Ovary (tissue), 10 donors: ENCODE measurements at regions of chr11 and their contacts with region 1.

Region 1: DNA sequence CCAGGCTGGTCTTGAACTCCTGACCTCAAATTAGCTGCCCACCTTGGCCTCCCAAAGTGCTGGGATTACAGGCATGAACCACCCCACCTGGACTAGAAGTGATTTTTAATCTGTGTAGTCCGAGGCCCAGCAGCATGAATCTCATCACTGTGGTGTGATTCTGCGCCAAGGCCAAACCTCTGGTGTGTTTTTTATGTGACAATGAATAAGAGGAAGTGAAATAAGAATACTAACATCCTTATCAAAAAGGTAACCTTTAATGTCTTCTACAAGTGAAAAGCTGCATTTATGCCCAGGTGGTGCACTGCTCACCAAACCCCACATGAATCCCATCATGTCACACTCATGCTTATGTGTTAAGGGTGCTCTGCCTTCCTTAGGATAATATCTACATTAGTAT is 77.1 kb upstream of the OR9Q1 start:
- DNase-seq: no peak
- H3K4me3 ChIP-seq: no peak overlapping the region
- H3K27ac ChIP-seq: no peak overlapping the region
- H3K4me1 ChIP-seq: no peaks in the 10 kb centered on the region
- H3K27me3 ChIP-seq: no peaks in the 10 kb centered on the region
- CTCF ChIP-seq: no peak
- EP300 ChIP-seq: no peak
- POLR2A ChIP-seq: no peak

Region 2: GRCh38 chr11:57936050-57936418 is 10.6 kb before region 1 on chr11:
- intact Hi-C with region 1: no loop called
- DNase-seq: no peak
- H3K4me3 ChIP-seq: no peak overlapping the region
- H3K27ac ChIP-seq: no peak overlapping the region
- H3K4me1 ChIP-seq: no peaks in the 10 kb centered on the region
- H3K27me3 ChIP-seq: no peaks in the 10 kb centered on the region
- CTCF ChIP-seq: no peak
- EP300 ChIP-seq: no peak
- POLR2A ChIP-seq: no peak

Region 3: DNA sequence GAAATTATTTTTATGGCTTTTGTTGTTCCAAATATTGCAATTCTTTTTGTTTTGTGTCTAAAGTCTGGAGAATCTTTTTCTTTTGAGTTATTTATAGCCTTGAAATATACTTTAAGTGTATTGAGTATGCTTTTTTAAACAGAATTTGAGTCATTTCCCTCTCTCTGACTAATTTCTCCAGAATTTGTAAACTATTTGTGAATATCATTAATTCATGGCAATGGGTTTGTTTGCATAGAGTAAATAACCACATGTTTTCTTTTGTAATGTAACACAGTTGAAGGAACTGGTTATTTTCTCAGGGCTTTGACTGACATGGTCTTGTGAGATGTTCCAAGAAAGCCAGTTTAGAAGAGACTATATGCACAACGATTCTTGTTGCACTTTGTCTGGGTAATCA is 1297.0 kb after region 1 on chr11:
- intact Hi-C with region 1: loop called in 1 of 4 experiments (anchors 5 kb)
- DNase-seq: no peak
- H3K4me3 ChIP-seq: no peak overlapping the region
- H3K27ac ChIP-seq: no peak overlapping the region
- H3K4me1 ChIP-seq: no peaks in the 10 kb centered on the region
- H3K27me3 ChIP-seq: no peaks in the 10 kb centered on the region
- CTCF ChIP-seq: no peak
- EP300 ChIP-seq: no peak
- POLR2A ChIP-seq: no peak